ENCODE measurements at regions of chr14 and their contacts with region 1.

Region 1: GRCh38 chr14:70640938-70641547 is 673 bp upstream of the TTC9 start:
- DNase-seq: peak; percentile 47 to 77
- H3K4me3 ChIP-seq: peak overlapping the region; percentile 97
- H3K27ac ChIP-seq: 0 out of 2 replicates have a peak overlapping the region, but pooled peaks have one; percentile 1
- H3K4me1 ChIP-seq: peaks cover 32% of the 10 kb centered on the region
- H3K27me3 ChIP-seq: no peaks in the 10 kb centered on the region
- CTCF ChIP-seq: no peak

Region 2: DNA sequence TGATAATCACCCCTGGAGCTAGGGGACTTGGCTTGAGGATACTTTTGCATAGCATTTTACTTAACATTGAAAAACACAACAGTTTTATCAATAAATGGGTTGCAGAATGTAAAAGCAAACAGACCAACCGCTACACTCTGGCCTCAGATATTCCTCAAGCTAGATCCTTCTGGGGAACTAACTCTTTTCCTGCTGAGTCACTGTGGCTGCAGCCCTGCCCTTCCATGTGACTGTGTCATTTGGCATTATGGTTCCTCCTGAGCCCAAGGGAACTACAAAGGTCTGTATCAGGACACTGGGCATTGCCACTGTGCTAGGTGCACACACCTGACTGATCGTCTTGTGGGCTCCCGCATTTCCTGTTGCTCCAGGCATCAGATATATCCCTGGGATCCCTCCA is 57.2 kb after region 1 on chr14:
- CTCF ChIA-PET with region 1: no interaction called
- POLR2A ChIA-PET with region 1: no interaction called
- intact Hi-C with region 1: loop called (anchors 2 kb)
- DNase-seq: peak; percentile 73 to 87
- H3K4me3 ChIP-seq: peak overlapping the region; percentile 22; the same call in 1 of the 2 replicates
- H3K27ac ChIP-seq: peak overlapping the region; percentile 97
- H3K4me1 ChIP-seq: peaks cover 45% of the 10 kb centered on the region
- H3K27me3 ChIP-seq: no peaks in the 10 kb centered on the region
- CTCF ChIP-seq: no peak

Region 3: DNA sequence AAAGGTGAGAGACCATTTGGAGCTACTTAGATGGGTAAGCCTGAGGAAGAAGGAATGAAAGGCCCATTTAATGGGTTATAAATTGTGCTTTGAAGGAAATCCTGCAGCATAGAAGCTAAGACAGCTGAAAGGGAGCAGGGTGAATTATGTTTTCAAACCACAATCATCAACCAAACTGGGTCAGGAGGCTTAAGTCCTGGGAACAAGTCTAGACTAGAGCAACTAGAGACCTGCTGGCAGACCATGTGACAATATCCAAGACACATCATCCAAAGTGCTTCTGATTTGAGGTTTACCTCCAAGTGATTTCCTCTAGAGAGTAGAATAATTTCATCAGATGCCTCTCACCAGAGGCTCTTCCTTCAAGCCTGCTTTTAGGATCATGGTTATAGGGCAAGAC is 114.6 kb after region 1 on chr14:
- CTCF ChIA-PET with region 1: no interaction called
- POLR2A ChIA-PET with region 1: no interaction called
- intact Hi-C with region 1: no loop called
- DNase-seq: peak in 1 of 2 experiments; percentile 51
- H3K4me3 ChIP-seq: no peak overlapping the region
- H3K27ac ChIP-seq: peak overlapping the region; percentile 87
- H3K4me1 ChIP-seq: peaks cover 36% of the 10 kb centered on the region
- H3K27me3 ChIP-seq: no peaks in the 10 kb centered on the region
- CTCF ChIP-seq: no peak

Measured in PC-9 (cell line).